ENCODE measurements at regions of chr15 and their contacts with region 1.

Region 1: DNA sequence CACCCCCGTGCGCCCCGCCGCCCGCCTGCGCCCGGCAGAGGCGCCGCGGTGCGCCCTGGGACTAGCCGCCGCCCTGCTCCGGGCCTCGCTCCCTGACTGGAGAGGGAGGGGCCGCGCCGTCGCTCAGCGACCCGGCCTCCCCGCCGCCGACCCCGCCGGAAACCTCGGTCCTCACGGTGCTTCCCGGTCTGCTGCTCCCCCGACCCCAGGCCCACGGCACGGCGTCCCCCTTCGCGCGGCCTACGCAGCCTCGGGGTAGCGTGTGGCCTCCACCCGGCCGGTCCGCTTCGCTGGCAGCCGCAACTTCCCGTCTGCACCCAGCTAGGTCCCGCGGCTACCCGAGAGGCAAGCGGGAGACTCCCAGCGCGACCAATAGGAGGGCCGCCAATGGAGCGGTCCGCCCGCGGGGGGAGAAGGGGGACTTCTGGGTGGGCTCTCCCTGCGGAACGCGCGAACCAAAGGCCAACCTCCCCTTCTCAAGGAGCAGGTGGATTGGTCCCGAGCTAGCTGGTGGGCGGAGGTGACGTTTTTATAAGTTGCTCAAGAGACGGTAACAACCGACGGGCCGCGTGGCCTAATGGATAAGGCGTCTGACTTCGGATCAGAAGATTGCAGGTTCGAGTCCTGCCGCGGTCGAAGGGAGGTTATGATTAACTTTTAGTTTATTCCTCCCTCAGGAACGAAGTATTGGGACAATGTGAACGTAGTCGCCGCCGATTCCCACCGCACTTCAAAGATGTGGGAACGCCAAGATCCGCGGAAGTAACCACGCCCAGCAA is at the start of gene POLG:
- H3K4me3 ChIP-seq: peak within 1 kb of the TSS; percentile 95
- H3K27ac ChIP-seq: peak within 1 kb of the TSS; percentile 62
- H3K4me1 ChIP-seq: peaks cover 10% of the 10 kb centered on the region
- CTCF ChIP-seq: no peak

Region 2: DNA sequence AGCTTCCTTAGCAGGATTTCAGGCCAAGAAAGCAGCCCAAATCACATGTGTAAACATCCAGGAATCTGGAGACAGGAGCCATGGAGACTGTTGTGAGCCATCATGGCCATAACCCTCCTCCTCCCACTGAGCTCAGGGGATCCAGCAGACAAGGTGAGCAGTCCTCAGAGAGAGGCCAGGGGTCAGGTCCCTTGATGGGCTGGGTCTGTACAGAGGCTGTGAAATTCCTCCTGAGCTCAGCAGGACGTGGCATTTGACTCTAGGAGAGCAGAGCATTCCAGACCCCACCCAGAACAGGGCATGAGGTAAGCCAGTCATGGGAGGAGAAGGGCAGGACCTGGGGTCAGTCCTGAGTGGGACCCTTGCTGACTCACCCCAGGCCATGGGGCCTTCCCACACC is 598.5 kb before region 1 on chr15:
- CTCF ChIA-PET with region 1: no interaction called
- POLR2A ChIA-PET with region 1: no interaction called
- H3K4me3 ChIP-seq: no peak overlapping the region
- H3K27ac ChIP-seq: no peak overlapping the region
- H3K4me1 ChIP-seq: no peaks in the 10 kb centered on the region
- CTCF ChIP-seq: no peak

Region 3: GRCh38 chr15:89164712-89165211 is 169.9 kb before region 1 on chr15:
- CTCF ChIA-PET with region 1: no interaction called
- POLR2A ChIA-PET with region 1: no interaction called
- H3K4me3 ChIP-seq: no peak overlapping the region
- H3K27ac ChIP-seq: no peak overlapping the region
- H3K4me1 ChIP-seq: peaks cover 24% of the 10 kb centered on the region; the same call in 1 of the 2 replicates
- CTCF ChIP-seq: no peak

Region 4: DNA sequence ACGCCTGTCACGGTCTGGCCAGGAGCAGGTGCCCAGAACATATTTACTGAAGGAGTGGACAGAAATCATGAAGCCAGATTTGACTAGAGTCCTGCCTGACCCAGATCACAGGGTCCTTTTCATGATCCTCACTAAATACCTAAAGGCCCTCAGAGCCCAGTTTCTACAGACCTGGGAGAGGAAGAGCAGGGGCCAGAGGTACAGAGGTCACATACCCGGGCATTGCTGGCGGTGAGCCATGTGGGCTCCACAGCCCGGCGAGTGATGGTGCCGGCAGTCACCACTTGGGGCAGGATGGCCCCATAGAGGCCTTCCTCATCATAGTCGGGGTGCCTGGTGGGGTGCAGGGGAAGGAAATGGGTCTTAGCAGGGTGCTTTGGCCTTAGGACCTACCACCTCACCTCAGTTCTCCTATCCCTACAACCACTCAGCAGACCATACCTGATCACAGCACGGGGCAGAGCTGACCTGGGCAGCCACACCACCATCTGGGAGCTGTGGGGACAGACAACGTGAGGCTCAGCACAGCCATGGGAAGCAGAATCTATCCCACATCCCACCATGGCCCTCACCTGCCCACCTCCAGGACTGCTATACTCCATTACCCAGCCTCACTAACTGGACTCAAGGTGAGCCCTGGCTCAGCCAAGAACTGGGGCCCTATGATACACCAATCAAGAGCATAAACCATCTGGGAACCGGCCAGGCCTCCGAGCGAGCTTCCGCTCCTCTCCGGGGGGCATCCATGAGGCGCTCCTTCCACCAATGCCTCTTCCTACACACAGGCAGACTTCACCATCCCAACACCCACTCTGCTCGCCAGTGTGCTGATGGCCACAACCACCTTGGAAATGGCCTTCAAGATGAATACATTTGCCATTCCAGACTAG is 12.9 kb before region 1 on chr15:
- CTCF ChIA-PET with region 1: interaction called, 18 read pairs
- POLR2A ChIA-PET with region 1: interaction called, 21 read pairs
- H3K4me3 ChIP-seq: no peak overlapping the region
- H3K27ac ChIP-seq: no peak overlapping the region
- H3K4me1 ChIP-seq: no peaks in the 10 kb centered on the region
- CTCF ChIP-seq: 0 out of 2 replicates have a peak, but pooled peaks have one; percentile 9

Measured in HEK293 (cell line).